ENCODE measurements at regions of chr11 and their contacts with region 1.

Region 1: DNA sequence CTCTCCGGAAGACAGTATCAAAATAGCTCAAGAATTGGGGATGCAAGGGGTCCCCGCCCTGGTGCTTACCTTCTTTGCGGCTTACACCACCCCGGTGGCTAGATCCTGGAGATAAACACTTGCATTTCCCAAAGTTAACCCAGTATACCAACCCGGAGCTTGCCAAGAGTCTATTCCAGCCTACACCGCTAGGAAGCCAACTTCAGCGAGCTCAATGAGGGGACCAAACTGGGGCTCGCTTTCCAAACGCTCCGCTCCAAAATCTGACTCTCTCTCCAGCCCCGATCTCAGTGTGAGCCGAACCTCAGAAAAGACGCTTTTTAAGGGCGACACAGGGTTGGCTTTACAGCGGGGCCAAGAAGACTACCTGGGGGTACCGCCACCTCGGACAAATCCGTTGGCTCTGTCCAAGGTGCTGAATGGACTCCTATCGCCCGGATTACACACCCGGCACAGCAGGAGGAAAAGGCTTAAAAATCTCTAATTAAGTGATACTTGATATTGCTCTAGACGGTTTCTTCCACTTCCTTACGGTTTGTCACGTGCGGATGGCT is 20.1 kb upstream of the BDNF start:
- DNase-seq: peak; percentile 78
- ATAC-seq: peak; percentile 11
- H3K4me3 Mint-ChIP-seq: peak overlapping the region; percentile 94
- H3K27ac Mint-ChIP-seq: no peak overlapping the region
- H3K4me1 Mint-ChIP-seq: peaks cover 43% of the 10 kb centered on the region
- H3K27me3 Mint-ChIP-seq: peaks cover 53% of the 10 kb centered on the region
- CTCF ChIP-seq: peak; percentile 18; the same call in 1 of the 2 replicates

Region 2: DNA sequence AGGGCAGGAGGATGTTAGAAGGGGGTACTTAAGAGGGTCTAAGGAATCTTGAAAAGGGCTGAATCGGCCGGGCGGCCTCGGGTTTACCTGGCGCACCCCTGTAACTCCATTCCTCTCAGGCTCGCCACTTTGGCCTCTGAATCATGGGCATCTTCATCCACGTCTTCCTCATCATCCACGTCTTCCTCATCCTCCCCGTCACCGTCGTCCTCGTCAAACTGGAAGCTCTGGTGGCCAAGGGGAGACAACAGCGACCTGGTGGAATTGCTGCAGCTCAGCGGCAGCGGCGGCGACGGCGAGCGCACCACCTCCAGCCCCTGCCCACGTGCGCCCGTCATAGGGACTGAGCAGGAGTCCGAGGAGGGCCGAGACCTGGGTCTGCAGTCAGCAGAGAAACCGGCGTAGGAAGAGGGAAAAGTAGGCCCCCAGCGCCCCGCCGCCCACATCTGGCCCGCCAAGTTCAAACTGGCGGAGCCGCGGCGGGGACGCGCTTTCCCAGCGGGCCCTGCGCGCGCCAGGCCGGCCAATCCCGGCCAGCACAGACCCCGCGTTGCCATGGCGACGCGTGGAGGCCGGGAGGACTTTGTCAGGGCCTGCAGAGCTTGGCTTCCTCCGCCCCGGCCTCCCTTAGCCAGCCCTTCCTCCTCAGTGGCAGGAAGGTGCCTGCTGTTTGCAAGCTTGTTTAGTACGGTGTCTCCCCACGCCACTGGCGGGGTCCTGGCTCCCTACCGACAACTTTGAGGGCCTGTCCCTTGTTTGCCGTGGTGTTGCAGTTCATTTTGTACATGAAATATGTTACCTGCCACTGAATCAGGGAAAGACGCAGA is 357.4 kb before region 1 on chr11 and contains the start of gene CCDC34:
- CTCF ChIA-PET with region 1: no interaction called
- POLR2A ChIA-PET with region 1: no interaction called
- DNase-seq: peak; percentile 92
- ATAC-seq: peak; percentile 96
- H3K4me3 Mint-ChIP-seq: peak within 1 kb of the TSS; percentile 83
- H3K27ac Mint-ChIP-seq: peak within 1 kb of the TSS; percentile 93
- H3K4me1 Mint-ChIP-seq: peaks cover 32% of the 10 kb centered on the region
- H3K27me3 Mint-ChIP-seq: no peaks in the 10 kb centered on the region
- CTCF ChIP-seq: no peak
- total RNA-seq, gene CCDC34: 18.9 to 23.7 TPM (median 22.8 TPM) in 3 replicates

Region 3: DNA sequence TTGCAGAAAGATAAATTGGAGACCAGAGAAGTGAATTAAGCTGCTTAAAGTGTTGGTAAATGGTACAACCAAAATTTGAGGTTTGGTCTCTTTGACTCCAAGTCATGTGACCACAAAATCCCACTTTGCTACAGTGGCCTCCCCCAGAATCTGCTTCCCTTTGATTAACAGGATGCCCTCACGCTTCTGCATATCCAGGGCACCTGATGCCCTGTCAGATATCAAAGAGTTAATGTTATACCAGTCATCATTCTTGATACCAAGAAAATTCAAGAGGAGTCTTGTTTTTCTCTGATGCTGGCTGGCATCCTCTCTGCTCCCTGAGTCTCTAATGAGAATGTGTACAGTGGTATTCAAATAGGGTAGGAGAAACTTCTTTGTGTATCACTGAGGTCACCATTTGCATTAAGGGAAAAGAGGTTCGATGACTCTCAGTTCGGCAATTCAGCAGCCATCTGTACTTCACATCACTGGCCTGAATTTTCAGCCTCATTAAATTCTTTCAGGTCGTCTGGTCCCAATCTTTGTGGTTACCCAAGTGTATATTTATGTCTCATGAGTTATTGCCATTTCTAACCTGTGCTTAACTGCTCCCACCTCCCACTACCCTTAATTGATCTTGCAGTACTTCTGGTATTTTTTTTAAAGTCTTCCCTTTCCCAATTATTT is 94.0 kb before region 1 on chr11:
- CTCF ChIA-PET with region 1: interaction called, 7 read pairs
- POLR2A ChIA-PET with region 1: interaction called, 13 read pairs
- DNase-seq: no peak
- ATAC-seq: peak; percentile 6
- H3K4me3 Mint-ChIP-seq: no peak overlapping the region
- H3K27ac Mint-ChIP-seq: peak overlapping the region; percentile 98
- H3K4me1 Mint-ChIP-seq: peaks cover 86% of the 10 kb centered on the region
- H3K27me3 Mint-ChIP-seq: no peaks in the 10 kb centered on the region; the same call in 1 of the 2 replicates
- CTCF ChIP-seq: no peak

Region 4: DNA sequence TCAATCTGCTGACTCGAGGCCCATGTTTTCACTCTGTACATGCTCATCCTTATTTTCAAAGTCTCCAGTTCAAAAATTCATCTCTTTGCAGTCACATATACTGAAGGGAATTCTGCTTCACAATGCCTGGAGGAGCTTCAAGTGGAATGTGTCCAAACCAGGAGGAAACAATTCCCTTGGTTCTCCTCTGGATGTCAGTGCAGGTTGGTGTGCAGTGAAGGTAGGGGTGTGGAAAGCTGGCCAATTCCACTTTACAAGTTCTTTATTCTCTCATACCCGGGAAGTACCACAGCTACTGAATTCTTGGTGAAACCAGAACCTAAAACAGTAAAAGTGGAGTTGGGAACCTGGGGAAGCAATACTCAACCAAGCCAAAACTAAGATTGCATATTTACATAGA is 77.4 kb before region 1 on chr11:
- CTCF ChIA-PET with region 1: interaction called, 13 read pairs
- POLR2A ChIA-PET with region 1: no interaction called
- DNase-seq: no peak
- ATAC-seq: peak; percentile 46; the same call in 1 of the 2 replicates
- H3K4me3 Mint-ChIP-seq: no peak overlapping the region
- H3K27ac Mint-ChIP-seq: no peak overlapping the region
- H3K4me1 Mint-ChIP-seq: peaks cover 38% of the 10 kb centered on the region
- H3K27me3 Mint-ChIP-seq: peaks cover 4% of the 10 kb centered on the region
- CTCF ChIP-seq: no peak

Region 5: GRCh38 chr11:27656806-27657483 is 63.4 kb before region 1 on chr11:
- CTCF ChIA-PET with region 1: no interaction called
- POLR2A ChIA-PET with region 1: no interaction called
- DNase-seq: no peak
- ATAC-seq: peak; percentile 43; the same call in 1 of the 2 replicates
- H3K4me3 Mint-ChIP-seq: no peak overlapping the region
- H3K27ac Mint-ChIP-seq: no peak overlapping the region
- H3K4me1 Mint-ChIP-seq: peaks cover 34% of the 10 kb centered on the region
- H3K27me3 Mint-ChIP-seq: no peaks in the 10 kb centered on the region
- CTCF ChIP-seq: no peak

Region 6: DNA sequence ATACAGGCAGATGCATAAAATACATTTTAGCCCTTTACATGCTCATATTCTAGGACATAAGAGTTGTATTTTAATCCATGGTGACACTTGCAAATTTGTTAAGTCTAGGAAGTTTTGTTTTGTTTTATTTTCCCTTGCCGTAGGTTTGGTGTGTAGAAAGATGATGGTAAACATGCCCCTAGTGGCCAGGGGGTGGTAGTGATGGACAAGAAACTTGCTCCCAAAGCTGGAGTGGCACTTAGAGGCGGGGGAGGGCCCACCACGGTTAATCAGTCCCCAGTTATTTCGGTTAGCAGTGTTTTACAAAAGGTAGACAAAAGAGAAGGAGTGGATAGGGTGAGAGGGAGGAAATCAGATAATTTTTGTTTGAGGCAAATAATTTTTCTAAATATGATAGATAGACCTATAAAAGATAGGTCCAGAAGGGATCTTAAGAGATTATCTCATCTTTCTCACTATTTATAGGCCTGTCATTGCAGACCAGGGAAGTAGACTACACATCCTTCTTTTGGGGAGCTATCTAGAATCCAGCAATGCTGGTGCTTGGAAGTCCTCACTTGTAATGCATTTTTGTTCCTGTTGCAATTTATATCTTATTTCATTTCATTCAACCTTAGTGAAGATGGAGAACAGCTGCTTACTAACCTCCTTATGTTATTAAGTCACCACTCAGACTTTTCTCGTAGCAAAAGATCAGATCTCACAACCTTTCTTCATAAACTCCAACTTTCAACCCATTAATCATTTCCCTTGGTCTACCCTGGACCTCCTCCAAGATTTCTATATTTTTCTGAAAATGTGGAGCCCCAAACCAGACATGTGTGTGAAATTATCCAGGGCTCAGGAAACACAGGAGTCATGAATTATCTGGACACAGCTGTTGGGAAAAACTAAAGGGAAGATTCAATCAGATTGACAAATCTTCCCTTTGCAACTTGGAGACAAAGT is 14.2 kb before region 1 on chr11:
- CTCF ChIA-PET with region 1: interaction called, 184 read pairs
- POLR2A ChIA-PET with region 1: interaction called, 48 read pairs
- DNase-seq: peak; percentile 58
- ATAC-seq: peak; percentile 90
- H3K4me3 Mint-ChIP-seq: no peak overlapping the region
- H3K27ac Mint-ChIP-seq: no peak overlapping the region
- H3K4me1 Mint-ChIP-seq: peaks cover 29% of the 10 kb centered on the region
- H3K27me3 Mint-ChIP-seq: peaks cover 44% of the 10 kb centered on the region
- CTCF ChIP-seq: peak; percentile 73

Region 7: GRCh38 chr11:28107748-28108618 is 387.6 kb after region 1 on chr11 and contains the starts of genes KIF18A and METTL15:
- CTCF ChIA-PET with region 1: interaction called, 6 read pairs
- POLR2A ChIA-PET with region 1: interaction called, 10 read pairs
- DNase-seq: peak; percentile 100
- ATAC-seq: peak; percentile 92
- H3K4me3 Mint-ChIP-seq: peak within 1 kb of the TSS; percentile 98
- H3K27ac Mint-ChIP-seq: peak within 1 kb of the TSS; percentile 96
- H3K4me1 Mint-ChIP-seq: peaks cover 27% of the 10 kb centered on the region
- H3K27me3 Mint-ChIP-seq: no peaks in the 10 kb centered on the region
- CTCF ChIP-seq: no peak
- total RNA-seq, gene KIF18A: 16.6 to 20.6 TPM (median 18.6 TPM) in 3 replicates
- total RNA-seq, gene METTL15: 13.2 to 16.3 TPM (median 15.8 TPM) in 3 replicates

Measured in WTC11 (cell line).